ENCODE measurements at regions of chr5 and their contacts with region 1.

Region 1: GRCh38 chr5:73437101-73437776 is 11.3 kb downstream of the FOXD1 start:
- DNase-seq: no peak
- ATAC-seq: peak; percentile 88
- H3K4me3 ChIP-seq: peak overlapping the region; percentile 39 to 65
- H3K27ac ChIP-seq: peak overlapping the region; percentile 98
- H3K4me1 ChIP-seq: peaks cover 58% of the 10 kb centered on the region
- H3K27me3 ChIP-seq: no peaks in the 10 kb centered on the region
- CTCF ChIP-seq: peak; percentile 89

Region 2: GRCh38 chr5:72767289-72767998 is 669.8 kb before region 1 on chr5:
- CTCF ChIA-PET with region 1: no interaction called
- POLR2A ChIA-PET with region 1: no interaction called
- in situ Hi-C with region 1: no loop called
- intact Hi-C with region 1: no loop called
- DNase-seq: no peak
- ATAC-seq: no peak
- H3K4me3 ChIP-seq: no peak overlapping the region
- H3K27ac ChIP-seq: no peak overlapping the region
- H3K4me1 ChIP-seq: no peaks in the 10 kb centered on the region
- H3K27me3 ChIP-seq: no peaks in the 10 kb centered on the region
- CTCF ChIP-seq: no peak

Region 3: GRCh38 chr5:73338256-73339050 is 98.8 kb before region 1 on chr5:
- CTCF ChIA-PET with region 1: no interaction called
- POLR2A ChIA-PET with region 1: no interaction called
- in situ Hi-C with region 1: no loop called
- intact Hi-C with region 1: no loop called
- DNase-seq: no peak
- ATAC-seq: peak; percentile 82
- H3K4me3 ChIP-seq: 0 out of 4 replicates have a peak overlapping the region, but pooled peaks of 1 of the 2 experiments have one; percentile 10
- H3K27ac ChIP-seq: peak overlapping the region; percentile 48
- H3K4me1 ChIP-seq: peaks cover 12% of the 10 kb centered on the region
- H3K27me3 ChIP-seq: no peaks in the 10 kb centered on the region
- CTCF ChIP-seq: no peak

Region 4: GRCh38 chr5:73370640-73371583 is 66.3 kb before region 1 on chr5:
- CTCF ChIA-PET with region 1: no interaction called
- POLR2A ChIA-PET with region 1: no interaction called
- in situ Hi-C with region 1: no loop called
- intact Hi-C with region 1: loop called (anchors 10 kb)
- DNase-seq: peak; percentile 98
- ATAC-seq: peak; percentile 90
- H3K4me3 ChIP-seq: peak overlapping the region in 1 of 2 experiments; percentile 42; a peak in 2 of 4 replicates
- H3K27ac ChIP-seq: peak overlapping the region; percentile 93
- H3K4me1 ChIP-seq: peaks cover 68% of the 10 kb centered on the region
- H3K27me3 ChIP-seq: no peaks in the 10 kb centered on the region
- CTCF ChIP-seq: no peak

Region 5: GRCh38 chr5:73928476-73928875 is 491.2 kb after region 1 on chr5:
- CTCF ChIA-PET with region 1: no interaction called
- POLR2A ChIA-PET with region 1: no interaction called
- in situ Hi-C with region 1: no loop called
- intact Hi-C with region 1: no loop called
- DNase-seq: no peak
- ATAC-seq: no peak
- H3K4me3 ChIP-seq: no peak overlapping the region
- H3K27ac ChIP-seq: no peak overlapping the region
- H3K4me1 ChIP-seq: no peaks in the 10 kb centered on the region
- H3K27me3 ChIP-seq: no peaks in the 10 kb centered on the region
- CTCF ChIP-seq: no peak